ENCODE measurements at regions of chr15 and their contacts with region 1.

Region 1: DNA sequence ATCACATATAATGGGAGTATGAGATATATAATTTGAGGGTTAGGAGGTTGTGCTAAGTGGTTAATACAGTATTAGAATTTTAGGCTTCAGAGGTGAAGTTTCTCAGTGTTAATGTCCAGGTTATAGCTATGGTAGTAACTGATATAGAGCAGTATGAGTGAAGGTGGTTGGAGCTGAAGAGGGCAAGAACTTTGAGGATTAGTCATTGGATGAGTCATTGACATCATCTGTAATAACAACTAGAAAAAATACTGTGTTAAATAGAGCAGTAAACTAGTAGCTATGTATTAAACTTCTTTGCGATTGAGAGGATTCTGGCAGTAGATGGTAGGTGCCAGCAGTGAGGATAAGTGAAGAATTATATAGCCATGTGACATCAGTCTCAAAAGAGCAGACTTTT is 47.5 kb upstream of the EIF3J start:
- DNase-seq: no peak
- H3K4me3 Mint-ChIP-seq: no peak overlapping the region
- H3K27ac Mint-ChIP-seq: peak overlapping the region; percentile 55
- H3K4me1 Mint-ChIP-seq: peaks cover 39% of the 10 kb centered on the region
- H3K27me3 Mint-ChIP-seq: no peaks in the 10 kb centered on the region

Region 2: GRCh38 chr15:44033894-44034293 is 455.6 kb before region 1 on chr15:
- CTCF ChIA-PET with region 1: no interaction called
- POLR2A ChIA-PET with region 1: no interaction called
- intact Hi-C with region 1: no loop called
- DNase-seq: no peak
- H3K4me3 Mint-ChIP-seq: no peak overlapping the region
- H3K27ac Mint-ChIP-seq: no peak overlapping the region
- H3K4me1 Mint-ChIP-seq: peaks cover 3% of the 10 kb centered on the region
- H3K27me3 Mint-ChIP-seq: peaks cover 17% of the 10 kb centered on the region

Region 3: GRCh38 chr15:44414001-44414400 is 75.5 kb before region 1 on chr15:
- CTCF ChIA-PET with region 1: no interaction called
- POLR2A ChIA-PET with region 1: no interaction called
- intact Hi-C with region 1: no loop called
- DNase-seq: peak; percentile 27
- H3K4me3 Mint-ChIP-seq: no peak overlapping the region
- H3K27ac Mint-ChIP-seq: no peak overlapping the region
- H3K4me1 Mint-ChIP-seq: peaks cover 4% of the 10 kb centered on the region
- H3K27me3 Mint-ChIP-seq: no peaks in the 10 kb centered on the region

Region 4: DNA sequence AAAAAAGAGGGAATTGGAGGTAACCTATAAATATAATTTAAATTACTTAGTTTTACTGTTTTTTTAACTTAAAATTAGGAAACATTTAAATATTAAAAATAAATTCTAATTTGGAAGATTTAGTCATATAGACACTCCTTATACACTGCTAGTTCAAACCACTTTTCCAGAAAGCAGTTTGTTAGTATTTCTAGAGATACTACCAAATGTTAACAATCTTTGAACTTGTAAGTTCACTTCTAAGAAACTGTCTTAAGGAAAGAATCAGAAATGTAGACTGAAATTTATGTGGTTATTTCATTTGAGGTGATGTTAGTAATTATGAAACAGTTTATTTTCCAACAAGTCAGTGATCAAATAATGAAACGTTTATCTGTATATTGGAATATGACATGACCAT is 39.3 kb before region 1 on chr15:
- CTCF ChIA-PET with region 1: no interaction called
- POLR2A ChIA-PET with region 1: no interaction called
- intact Hi-C with region 1: loop called (anchors 5 kb)
- DNase-seq: no peak
- H3K4me3 Mint-ChIP-seq: no peak overlapping the region
- H3K27ac Mint-ChIP-seq: no peak overlapping the region
- H3K4me1 Mint-ChIP-seq: peaks cover 47% of the 10 kb centered on the region
- H3K27me3 Mint-ChIP-seq: no peaks in the 10 kb centered on the region

Region 5: DNA sequence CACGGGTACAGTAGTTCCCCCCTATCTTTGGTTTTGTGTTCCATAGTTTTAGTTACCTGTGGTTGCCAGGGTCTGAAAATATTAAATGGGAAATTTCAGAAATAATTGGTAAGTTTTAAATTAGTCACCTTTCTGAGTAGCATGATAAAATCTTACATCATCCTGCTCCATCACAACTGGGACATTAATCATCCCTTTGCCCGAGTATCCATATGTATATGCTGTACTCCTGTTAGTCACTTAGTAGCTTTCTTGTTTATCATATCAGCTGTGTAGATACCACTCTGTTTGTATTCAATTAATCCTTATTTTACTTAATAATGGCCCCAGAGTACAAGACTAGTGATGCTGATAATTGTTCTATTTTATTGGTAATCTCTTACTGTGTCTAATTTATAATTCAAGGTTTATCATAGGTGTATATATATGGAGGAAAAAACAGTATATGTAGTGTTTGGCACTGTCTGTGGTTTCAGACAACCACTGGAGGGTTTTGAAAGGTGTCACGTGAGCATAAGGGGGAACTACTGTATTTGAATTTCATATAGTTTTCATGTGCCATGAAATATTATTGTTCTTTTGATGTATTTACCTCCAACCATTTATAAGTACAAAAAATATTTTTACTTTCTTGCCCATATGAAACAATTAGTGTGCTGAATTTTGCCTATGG is 20.6 kb before region 1 on chr15:
- CTCF ChIA-PET with region 1: no interaction called
- POLR2A ChIA-PET with region 1: interaction called, 3 read pairs
- intact Hi-C with region 1: loop called (anchors 2 kb)
- DNase-seq: no peak
- H3K4me3 Mint-ChIP-seq: no peak overlapping the region
- H3K27ac Mint-ChIP-seq: peak overlapping the region; percentile 7
- H3K4me1 Mint-ChIP-seq: peaks cover 17% of the 10 kb centered on the region
- H3K27me3 Mint-ChIP-seq: no peaks in the 10 kb centered on the region

Region 6: DNA sequence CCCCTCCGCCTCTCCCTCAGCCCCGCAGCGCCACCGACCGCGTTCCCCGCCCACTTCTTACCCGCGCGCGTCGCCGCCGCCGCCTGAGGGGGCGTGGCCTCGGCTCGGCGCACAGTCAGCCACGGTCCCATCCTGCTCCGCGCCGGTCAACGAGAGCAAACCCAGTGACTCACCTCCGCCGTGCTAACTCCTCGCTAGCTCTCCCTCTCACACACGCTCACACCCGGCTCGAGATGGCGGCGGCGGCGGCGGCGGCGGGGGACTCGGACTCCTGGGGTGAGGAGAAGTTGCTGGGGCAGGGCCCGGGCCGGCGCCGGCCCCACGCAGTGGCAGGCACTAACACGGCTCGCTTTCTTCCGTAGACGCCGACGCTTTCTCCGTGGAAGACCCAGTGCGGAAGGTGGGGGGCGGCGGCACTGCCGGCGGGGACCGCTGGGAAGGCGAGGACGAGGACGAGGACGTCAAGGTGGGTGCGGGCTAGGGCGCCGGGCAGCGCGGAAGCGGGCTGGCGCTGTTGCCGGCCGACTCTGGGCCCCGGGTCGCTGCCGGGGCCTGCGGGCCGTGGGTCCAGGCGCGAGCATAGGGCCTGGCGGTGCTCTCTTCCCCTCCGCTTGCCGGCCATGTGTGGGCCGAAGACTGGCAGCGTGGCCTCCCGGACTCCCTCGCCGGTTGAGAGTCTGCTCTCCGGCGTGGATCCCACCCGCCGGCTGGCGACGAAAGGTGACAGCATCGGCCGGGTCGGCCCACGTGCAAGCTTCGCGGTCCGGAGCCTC is 47.7 kb after region 1 on chr15 and contains the start of gene EIF3J:
- CTCF ChIA-PET with region 1: no interaction called
- POLR2A ChIA-PET with region 1: no interaction called
- intact Hi-C with region 1: loop called (anchors 5 kb)
- DNase-seq: peak; percentile 96
- H3K4me3 Mint-ChIP-seq: peak within 1 kb of the TSS; percentile 84
- H3K27ac Mint-ChIP-seq: peak within 1 kb of the TSS; percentile 94
- H3K4me1 Mint-ChIP-seq: peaks cover 43% of the 10 kb centered on the region
- H3K27me3 Mint-ChIP-seq: no peaks in the 10 kb centered on the region
- total RNA-seq, gene EIF3J: 92.6 to 95.2 TPM

Measured in activated CD4-positive, alpha-beta memory T cell treated with anti-CD3 and anti-CD28 coated beads for 36 hours (primary cell).